Esophagus muscularis mucosa (tissue), 4 donors: ENCODE measurements at regions of chr20 and their contacts with region 1.

Region 1: GRCh38 chr20:20824924-20825584 is 112.6 kb upstream of the RALGAPA2 start:
- DNase-seq: no peak
- H3K4me3 ChIP-seq: no peak overlapping the region
- H3K27ac ChIP-seq: no peak overlapping the region
- H3K4me1 ChIP-seq: peaks cover 0 to 8% (median 7%) of the 10 kb centered on the region in 4 donors
- H3K27me3 ChIP-seq: peaks cover 0 to 43% (median 2%) of the 10 kb centered on the region in 4 donors
- CTCF ChIP-seq: peak; percentile 55 to 70 (median 58)
- EP300 ChIP-seq: no peak
- POLR2A ChIP-seq: no peak

Region 2: GRCh38 chr20:20603339-20603990 is 221.6 kb before region 1 on chr20:
- intact Hi-C with region 1: loop called (anchors 10 kb)
- DNase-seq: no peak
- H3K4me3 ChIP-seq: no peak overlapping the region
- H3K27ac ChIP-seq: no peak overlapping the region
- H3K4me1 ChIP-seq: no peaks in the 10 kb centered on the region
- H3K27me3 ChIP-seq: no peaks in the 10 kb centered on the region
- CTCF ChIP-seq: no peak
- EP300 ChIP-seq: no peak
- POLR2A ChIP-seq: no peak

Region 3: DNA sequence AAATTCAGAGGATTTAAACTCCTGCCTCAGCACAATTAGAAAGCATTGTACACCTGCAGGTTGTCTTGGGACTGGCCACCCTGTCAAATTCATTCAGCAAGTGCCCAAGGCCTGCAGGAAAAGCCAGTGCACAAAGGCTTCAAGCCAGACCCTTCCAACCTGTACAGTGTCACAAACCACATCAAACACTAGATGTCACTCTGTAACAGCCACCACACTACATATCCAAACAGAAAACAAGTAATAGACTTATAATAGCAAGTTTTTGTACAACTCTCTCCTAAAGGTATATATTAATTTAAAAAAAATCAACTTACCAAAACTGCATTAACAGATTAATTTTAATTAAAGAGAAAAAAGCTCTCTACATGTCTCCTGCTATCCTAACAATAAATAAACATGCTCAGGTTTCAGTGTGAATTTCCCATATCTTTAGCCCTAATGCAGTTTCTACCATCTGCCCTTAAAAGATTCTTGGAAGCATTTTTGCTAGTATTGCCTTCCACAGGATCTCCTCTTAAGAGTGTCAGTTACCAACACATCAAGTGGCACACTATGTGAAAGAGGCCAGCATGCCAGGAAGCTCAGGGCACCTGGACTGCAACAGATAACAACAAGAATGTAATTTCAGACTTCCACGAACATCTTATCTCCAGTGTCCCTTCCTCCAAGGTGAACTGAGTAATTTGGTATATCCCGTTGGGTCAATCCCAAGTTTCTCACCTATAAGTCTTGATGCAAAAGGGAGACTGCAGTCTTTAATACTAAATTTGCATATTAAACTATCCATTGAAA is 160.1 kb before region 1 on chr20:
- intact Hi-C with region 1: loop called (anchors 2 kb)
- DNase-seq: no peak
- H3K4me3 ChIP-seq: no peak overlapping the region
- H3K27ac ChIP-seq: no peak overlapping the region
- H3K4me1 ChIP-seq: peaks cover 0 to 11% (median 5%) of the 10 kb centered on the region in 4 donors
- H3K27me3 ChIP-seq: no peaks in the 10 kb centered on the region
- CTCF ChIP-seq: peak in 2 of 3 experiments; percentile 17 to 42
- EP300 ChIP-seq: no peak
- POLR2A ChIP-seq: no peak

Region 4: GRCh38 chr20:20979934-20980333 is 154.9 kb after region 1 on chr20:
- intact Hi-C with region 1: no loop called
- DNase-seq: no peak
- H3K4me3 ChIP-seq: no peak overlapping the region
- H3K27ac ChIP-seq: no peak overlapping the region
- H3K4me1 ChIP-seq: no peaks in the 10 kb centered on the region
- H3K27me3 ChIP-seq: no peaks in the 10 kb centered on the region
- CTCF ChIP-seq: no peak
- EP300 ChIP-seq: no peak
- POLR2A ChIP-seq: no peak